Activated CD8-positive, alpha-beta memory T cell treated with anti-CD3 and anti-CD28 coated beads, Interleukin-2, amount 10 ng/mL, durations not matched to agents 7 days and 5 days (primary cell): ENCODE measurements at regions of chr17 and their contacts with region 1.

Region 1: DNA sequence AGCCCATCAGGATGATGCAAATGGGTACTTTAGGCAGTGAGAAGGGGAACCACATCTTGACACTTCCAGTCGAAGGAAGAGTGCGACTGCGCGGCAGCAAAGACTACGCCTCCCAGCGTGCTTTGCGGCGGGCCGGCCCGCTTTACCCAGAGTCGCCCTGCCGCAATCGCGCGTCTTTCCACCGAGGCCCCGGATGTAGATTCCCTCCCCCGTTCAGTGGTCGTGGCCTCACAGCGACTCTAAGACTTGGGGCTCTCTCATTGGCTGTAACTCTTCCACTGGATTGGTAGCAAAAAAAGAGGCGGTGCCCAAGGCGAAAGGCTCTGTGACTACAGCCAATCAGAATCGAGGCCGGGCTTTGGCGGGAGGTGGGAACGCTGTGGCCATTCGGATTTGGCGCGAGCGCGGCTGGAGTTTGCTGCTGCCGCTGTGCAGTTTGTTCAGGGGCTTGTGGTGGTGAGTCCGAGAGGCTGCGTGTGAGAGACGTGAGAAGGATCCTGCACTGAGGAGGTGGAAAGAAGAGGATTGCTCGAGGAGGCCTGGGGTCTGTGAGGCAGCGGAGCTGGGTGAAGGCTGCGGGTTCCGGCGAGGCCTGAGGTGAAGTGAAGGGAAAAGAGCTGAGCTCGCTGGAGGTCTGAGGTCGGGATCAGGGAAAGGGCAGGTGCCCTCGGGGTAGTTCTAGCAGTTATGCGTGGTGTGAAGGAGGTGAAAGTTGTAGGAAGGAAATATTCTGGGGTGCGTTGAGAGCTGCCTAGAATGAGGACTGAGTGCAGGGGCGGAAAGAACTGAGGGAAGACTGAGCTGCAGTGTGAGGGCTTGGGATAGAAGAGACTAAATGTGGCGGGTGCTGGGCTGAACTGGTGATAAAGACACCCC is at the start of gene CDC6:
- DNase-seq: peak; percentile 100
- ATAC-seq: peak; percentile 94
- H3K4me3 Mint-ChIP-seq: peak within 1 kb of the TSS; percentile 99
- H3K27ac Mint-ChIP-seq: peak within 1 kb of the TSS; percentile 98
- H3K4me1 Mint-ChIP-seq: peaks cover 56% of the 10 kb centered on the region
- H3K27me3 Mint-ChIP-seq: no peaks in the 10 kb centered on the region
- total RNA-seq, gene CDC6: 109 to 111 TPM

Region 2: GRCh38 chr17:40203131-40203530 is 84.6 kb before region 1 on chr17:
- CTCF ChIA-PET with region 1: interaction called, 46 read pairs
- DNase-seq: no peak
- ATAC-seq: no peak
- H3K4me3 Mint-ChIP-seq: no peak overlapping the region
- H3K27ac Mint-ChIP-seq: no peak overlapping the region
- H3K4me1 Mint-ChIP-seq: peaks cover 7% of the 10 kb centered on the region
- H3K27me3 Mint-ChIP-seq: peaks cover 6% of the 10 kb centered on the region